Mammary epithelial cell (primary cell): ENCODE measurements at regions of chr3 and their contacts with region 1.

Region 1: DNA sequence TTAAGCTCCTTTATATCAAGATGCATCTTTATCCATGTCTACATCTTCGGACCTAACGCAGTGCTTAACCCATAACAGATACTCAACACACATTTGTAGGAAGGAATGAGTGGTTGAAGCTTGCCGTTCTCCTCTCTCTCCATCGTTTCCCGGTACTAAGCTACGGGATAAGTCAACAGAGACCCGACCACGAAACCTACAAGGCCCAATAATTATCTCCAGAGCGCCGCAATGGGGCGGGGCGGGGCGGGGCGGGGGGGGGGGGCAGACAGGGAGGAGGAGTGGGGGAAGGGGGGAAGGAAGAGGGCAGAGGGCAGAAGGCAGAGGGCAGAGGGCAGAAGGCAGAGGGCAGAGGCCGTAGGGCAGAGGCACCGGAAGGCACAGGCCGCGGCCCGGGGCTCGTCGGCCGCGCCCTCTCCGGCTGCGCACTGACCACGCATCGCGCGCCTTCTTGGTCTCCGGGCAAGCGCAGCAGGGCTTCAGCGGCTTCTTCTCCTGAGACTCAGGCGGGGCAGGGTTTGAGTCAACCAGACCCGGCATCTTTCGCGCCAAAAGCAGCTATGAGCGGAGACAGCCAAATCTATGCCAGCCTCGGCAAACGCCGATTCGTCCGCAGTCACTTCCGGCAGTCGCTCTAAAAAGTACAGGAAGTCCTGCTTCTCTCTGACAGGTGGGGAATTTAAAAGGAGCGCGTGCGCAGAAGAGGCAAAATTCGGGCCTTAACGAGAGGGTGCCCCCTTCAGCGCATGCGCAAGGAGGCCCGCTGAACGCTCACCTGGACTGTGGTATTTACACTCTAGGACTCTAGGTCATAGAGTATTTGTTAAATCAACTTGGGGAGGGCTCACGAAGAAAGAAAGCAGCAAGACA is at the start of gene COX17:
- DNase-seq: peak; percentile 96
- H3K4me3 ChIP-seq: peak within 1 kb of the TSS; percentile 74 to 81 (median 78)
- H3K27ac ChIP-seq: peak within 1 kb of the TSS; percentile 75
- H3K4me1 ChIP-seq: peaks cover 14% of the 10 kb centered on the region
- H3K27me3 ChIP-seq: no peaks in the 10 kb centered on the region
- CTCF ChIP-seq: no peak
- total RNA-seq, gene COX17: 11.3 to 41.1 TPM

Region 2: DNA sequence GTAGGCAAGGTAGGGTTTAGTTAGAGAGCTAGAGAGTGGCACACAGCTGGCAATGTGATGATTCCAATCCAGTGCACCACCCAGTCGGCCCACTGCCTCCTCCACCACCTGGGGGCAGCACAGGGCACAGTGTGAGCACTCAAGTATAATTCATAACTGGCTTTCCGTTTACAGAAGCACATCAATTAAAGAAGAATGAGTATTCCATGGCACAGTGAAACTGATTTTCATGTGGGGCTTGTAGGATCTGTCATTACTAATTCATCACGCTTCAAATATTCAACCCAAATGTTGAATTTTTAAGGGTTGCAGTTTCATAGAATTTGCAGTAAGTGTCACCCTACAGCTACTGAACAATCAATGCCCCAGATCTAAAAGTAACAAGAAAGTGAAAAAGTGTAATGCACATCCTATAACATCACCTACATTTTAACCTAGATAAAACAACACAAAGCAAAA is 792.2 kb before region 1 on chr3:
- CTCF ChIA-PET with region 1: no interaction called
- dilution Hi-C with region 1: no loop called
- in situ Hi-C with region 1: loop called in 1 of 2 experiments (anchors 25 kb)
- intact Hi-C with region 1: no loop called
- DNase-seq: peak; percentile 23
- H3K4me3 ChIP-seq: no peak overlapping the region
- H3K27ac ChIP-seq: no peak overlapping the region
- H3K4me1 ChIP-seq: no peaks in the 10 kb centered on the region
- H3K27me3 ChIP-seq: peaks cover 5% of the 10 kb centered on the region
- CTCF ChIP-seq: peak; percentile 91 to 96

Region 3: GRCh38 chr3:119240591-119241434 is 436.2 kb before region 1 on chr3 and contains the start of gene B4GALT4:
- CTCF ChIA-PET with region 1: interaction called, 3 read pairs
- dilution Hi-C with region 1: no loop called
- in situ Hi-C with region 1: no loop called
- intact Hi-C with region 1: loop called (anchors 1 kb)
- DNase-seq: peak; percentile 88
- H3K4me3 ChIP-seq: peak within 1 kb of the TSS; percentile 51 to 82 (median 73)
- H3K27ac ChIP-seq: peak within 1 kb of the TSS; percentile 72
- H3K4me1 ChIP-seq: peaks cover 9% of the 10 kb centered on the region
- H3K27me3 ChIP-seq: no peaks in the 10 kb centered on the region
- CTCF ChIP-seq: no peak
- total RNA-seq, gene B4GALT4: 18.3 to 34.8 TPM

Region 4: GRCh38 chr3:119293871-119294695 is 382.9 kb before region 1 on chr3 and contains the start of gene ARHGAP31:
- CTCF ChIA-PET with region 1: no interaction called
- dilution Hi-C with region 1: no loop called
- in situ Hi-C with region 1: loop called in 1 of 2 experiments (anchors 25 kb)
- intact Hi-C with region 1: no loop called
- DNase-seq: peak; percentile 45
- H3K4me3 ChIP-seq: peak within 1 kb of the TSS; percentile 69 to 75 (median 69)
- H3K27ac ChIP-seq: peak within 1 kb of the TSS; percentile 40
- H3K4me1 ChIP-seq: peaks cover 16% of the 10 kb centered on the region
- H3K27me3 ChIP-seq: no peaks in the 10 kb centered on the region
- CTCF ChIP-seq: no peak
- total RNA-seq, gene ARHGAP31: 8.7 to 11.5 TPM

Region 5: GRCh38 chr3:119524931-119525662 is 151.9 kb before region 1 on chr3:
- CTCF ChIA-PET with region 1: interaction called, 4 read pairs
- dilution Hi-C with region 1: no loop called
- in situ Hi-C with region 1: loop called in 1 of 2 experiments (anchors 25 kb)
- intact Hi-C with region 1: loop called (anchors 2 kb)
- DNase-seq: no peak
- H3K4me3 ChIP-seq: no peak overlapping the region
- H3K27ac ChIP-seq: no peak overlapping the region
- H3K4me1 ChIP-seq: peaks cover 5% of the 10 kb centered on the region
- H3K27me3 ChIP-seq: no peaks in the 10 kb centered on the region
- CTCF ChIP-seq: peak in 1 of 2 donors; percentile 49

Region 6: GRCh38 chr3:119613201-119613600 is 63.8 kb before region 1 on chr3:
- CTCF ChIA-PET with region 1: no interaction called
- dilution Hi-C with region 1: no loop called
- in situ Hi-C with region 1: no loop called
- intact Hi-C with region 1: no loop called
- DNase-seq: no peak
- H3K4me3 ChIP-seq: no peak overlapping the region
- H3K27ac ChIP-seq: no peak overlapping the region
- H3K4me1 ChIP-seq: no peaks in the 10 kb centered on the region
- H3K27me3 ChIP-seq: peaks cover 3% of the 10 kb centered on the region
- CTCF ChIP-seq: no peak

Region 7: DNA sequence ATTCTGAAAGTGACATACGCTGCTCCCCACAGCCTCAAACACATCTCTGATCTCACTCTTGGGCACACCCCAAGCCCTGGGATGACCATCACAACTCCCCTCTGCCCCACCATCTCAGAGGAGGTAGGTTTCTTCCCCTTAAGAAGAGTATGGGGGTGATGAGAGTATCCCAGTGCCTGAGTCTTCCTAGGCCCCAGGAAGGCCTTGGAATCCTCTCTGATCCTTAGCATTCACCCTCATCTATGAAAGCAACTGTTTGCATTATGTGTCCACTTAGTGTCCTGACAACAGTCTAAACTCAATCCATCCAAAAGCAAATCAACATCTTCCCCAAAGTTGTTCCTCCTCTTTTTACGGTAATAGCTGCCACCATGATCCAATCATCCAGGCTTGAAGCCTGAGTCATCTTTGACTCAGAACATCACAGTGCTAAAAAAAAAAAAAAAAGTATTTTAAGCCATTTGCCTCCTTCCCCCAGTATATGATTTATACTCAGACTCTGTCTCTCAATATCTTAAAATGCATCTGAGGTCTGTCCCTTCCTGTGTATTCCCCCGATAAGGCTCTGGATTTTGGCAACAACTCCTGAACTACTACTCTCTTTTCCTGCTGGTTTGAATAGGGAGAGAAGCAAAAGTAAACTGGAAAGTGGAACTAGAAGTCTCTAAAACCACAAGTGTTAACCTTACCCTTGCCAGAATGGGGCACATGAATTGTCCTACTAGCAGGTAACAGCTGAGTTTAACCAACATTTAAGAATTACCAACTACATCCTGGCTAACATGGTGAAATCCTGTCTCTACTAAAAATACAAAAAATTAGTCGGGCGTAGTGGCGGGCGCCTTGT is 39.1 kb before region 1 on chr3:
- CTCF ChIA-PET with region 1: no interaction called
- dilution Hi-C with region 1: no loop called
- in situ Hi-C with region 1: no loop called
- intact Hi-C with region 1: loop called (anchors 1 kb)
- DNase-seq: peak; percentile 87
- H3K4me3 ChIP-seq: no peak overlapping the region
- H3K27ac ChIP-seq: peak overlapping the region; percentile 69
- H3K4me1 ChIP-seq: peaks cover 30% of the 10 kb centered on the region
- H3K27me3 ChIP-seq: no peaks in the 10 kb centered on the region
- CTCF ChIP-seq: no peak

Region 8: DNA sequence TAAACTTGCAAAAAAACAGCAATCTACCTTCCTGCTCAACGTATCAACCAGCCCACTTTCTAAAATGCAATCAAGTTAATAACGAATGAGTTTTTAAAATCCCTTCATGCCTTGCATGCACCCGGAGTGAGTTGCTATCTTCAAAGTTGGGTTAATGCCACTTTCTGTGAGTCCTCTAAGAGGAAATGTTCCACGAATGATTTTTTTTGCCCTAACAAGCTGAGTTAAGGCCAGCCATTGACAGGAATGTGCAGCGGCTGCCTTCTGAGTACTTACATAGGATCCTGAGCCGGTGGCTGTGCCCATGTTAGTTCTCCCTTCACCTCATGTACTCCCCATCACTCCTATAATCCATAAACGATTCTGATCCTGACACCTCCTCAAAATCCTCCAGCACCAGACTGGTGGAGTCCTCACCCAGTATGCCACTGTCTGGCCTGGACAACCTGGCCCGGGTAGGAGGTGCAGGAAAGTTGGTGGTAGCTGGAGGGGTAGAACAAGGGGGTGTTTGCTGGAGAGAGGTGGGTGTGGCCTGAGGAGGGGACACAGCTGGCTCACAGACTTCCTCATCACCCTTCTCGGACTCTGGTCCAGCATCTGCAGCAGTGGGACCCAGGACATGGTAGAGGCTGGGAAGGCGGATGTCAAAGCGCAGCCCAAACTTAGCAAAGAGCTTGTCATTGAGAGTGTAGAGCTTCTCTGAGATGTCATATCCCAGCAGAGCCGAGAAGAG is 29.0 kb before region 1 on chr3:
- CTCF ChIA-PET with region 1: no interaction called
- dilution Hi-C with region 1: no loop called
- in situ Hi-C with region 1: no loop called
- intact Hi-C with region 1: no loop called
- DNase-seq: no peak
- H3K4me3 ChIP-seq: no peak overlapping the region
- H3K27ac ChIP-seq: no peak overlapping the region
- H3K4me1 ChIP-seq: peaks cover 12% of the 10 kb centered on the region
- H3K27me3 ChIP-seq: no peaks in the 10 kb centered on the region
- CTCF ChIP-seq: no peak